ENCODE measurements at regions of chr22 and their contacts with region 1.

Region 1: DNA sequence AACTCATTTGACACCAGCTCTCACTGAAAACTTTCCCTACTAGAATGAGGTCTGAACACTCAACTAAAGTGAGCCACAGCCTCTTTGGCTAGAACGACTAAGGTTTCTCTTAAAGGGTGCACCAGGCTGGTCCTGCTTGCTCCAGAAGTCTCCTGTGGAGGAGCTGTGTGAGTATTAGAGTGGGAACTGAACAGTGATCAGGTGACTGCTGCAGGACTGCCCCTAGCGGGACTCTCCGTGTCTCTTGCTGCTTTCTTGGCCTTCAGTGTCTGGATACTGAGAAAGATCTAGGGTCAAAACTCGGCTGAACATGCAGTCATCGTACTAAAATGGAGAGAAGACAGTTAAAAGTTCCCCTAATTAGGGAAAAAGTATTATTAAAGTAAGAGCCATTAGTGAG is 34.6 kb downstream of the FAM118A start:
- DNase-seq: no peak
- ATAC-seq: no peak
- H3K4me3 ChIP-seq: no peak overlapping the region
- H3K27ac ChIP-seq: no peak overlapping the region
- H3K4me1 ChIP-seq: no peaks in the 10 kb centered on the region
- H3K27me3 ChIP-seq: no peaks in the 10 kb centered on the region
- CTCF ChIP-seq: no peak
- POLR2A ChIP-seq: no peak

Region 2: DNA sequence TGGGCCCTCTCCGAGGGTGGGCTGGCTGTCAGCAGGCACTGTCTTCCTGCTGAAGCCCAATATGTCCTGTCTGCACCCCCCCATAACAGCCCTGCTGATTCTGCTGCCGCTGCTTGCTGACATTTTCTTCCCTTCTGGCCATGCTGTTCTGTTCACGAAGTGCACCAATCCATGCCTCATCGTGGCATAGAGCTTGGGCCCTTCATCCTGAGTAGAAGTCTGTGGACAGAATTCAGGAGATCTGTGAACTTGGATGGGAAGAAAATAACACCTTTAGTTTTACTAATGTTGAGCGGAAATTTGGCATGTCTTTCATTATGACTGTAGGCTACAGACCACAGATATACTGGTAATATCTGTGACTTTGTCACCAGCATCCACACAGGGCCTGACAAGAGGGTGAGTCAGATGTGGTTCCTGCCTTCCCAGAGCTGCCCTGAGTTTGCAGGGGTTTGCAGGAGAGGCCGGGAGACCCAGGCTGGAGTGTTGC is 89.5 kb before region 1 on chr22:
- intact Hi-C with region 1: no loop called
- DNase-seq: no peak
- ATAC-seq: no peak
- H3K4me3 ChIP-seq: no peak overlapping the region
- H3K27ac ChIP-seq: no peak overlapping the region
- H3K4me1 ChIP-seq: no peaks in the 10 kb centered on the region
- H3K27me3 ChIP-seq: no peaks in the 10 kb centered on the region
- CTCF ChIP-seq: no peak
- POLR2A ChIP-seq: no peak

Region 3: DNA sequence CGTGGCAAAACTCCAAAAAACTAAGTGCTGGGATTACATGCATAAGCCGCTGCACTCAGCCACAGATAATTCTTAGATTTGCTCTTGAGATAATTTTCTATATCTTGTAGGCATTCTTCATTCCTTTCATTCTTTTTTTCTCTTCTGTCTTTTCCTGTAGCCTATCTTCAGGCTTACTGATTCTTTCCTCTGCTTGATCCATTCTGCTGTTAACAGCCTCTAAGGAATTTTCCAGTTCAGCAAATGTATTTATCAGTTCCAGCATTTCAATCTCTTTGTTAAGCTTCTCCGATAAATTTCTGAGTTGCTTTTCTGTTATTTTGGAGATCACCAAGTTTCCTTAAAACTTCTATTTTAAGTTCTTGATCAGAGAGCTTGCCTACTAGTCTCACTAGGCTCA is 22.4 kb after region 1 on chr22:
- intact Hi-C with region 1: loop called in 1 of 2 experiments (anchors 2 kb)
- DNase-seq: no peak
- ATAC-seq: no peak
- H3K4me3 ChIP-seq: no peak overlapping the region
- H3K27ac ChIP-seq: no peak overlapping the region
- H3K4me1 ChIP-seq: no peaks in the 10 kb centered on the region
- H3K27me3 ChIP-seq: no peaks in the 10 kb centered on the region
- CTCF ChIP-seq: no peak
- POLR2A ChIP-seq: no peak

Measured in right lobe of liver (tissue), 6 donors.